WTC11 (cell line): ENCODE measurements at regions of chr17 and their contacts with region 1.

Region 1: GRCh38 chr17:56319517-56319916 is 166.2 kb downstream of the ANKFN1 start:
- DNase-seq: no peak
- ATAC-seq: peak; percentile 49
- H3K4me3 Mint-ChIP-seq: no peak overlapping the region
- H3K27ac Mint-ChIP-seq: no peak overlapping the region
- H3K4me1 Mint-ChIP-seq: peaks cover 44% of the 10 kb centered on the region
- H3K27me3 Mint-ChIP-seq: no peaks in the 10 kb centered on the region; the same call in 1 of the 2 replicates
- CTCF ChIP-seq: peak; percentile 42; the same call in 1 of the 2 replicates

Region 2: GRCh38 chr17:56125830-56126819 is 193.4 kb before region 1 on chr17:
- CTCF ChIA-PET with region 1: interaction called, 17 read pairs
- POLR2A ChIA-PET with region 1: no interaction called
- DNase-seq: no peak
- ATAC-seq: peak; percentile 71
- H3K4me3 Mint-ChIP-seq: no peak overlapping the region
- H3K27ac Mint-ChIP-seq: no peak overlapping the region
- H3K4me1 Mint-ChIP-seq: peaks cover 25% of the 10 kb centered on the region
- H3K27me3 Mint-ChIP-seq: no peaks in the 10 kb centered on the region
- CTCF ChIP-seq: peak; percentile 29; the same call in 1 of the 2 replicates

Region 3: GRCh38 chr17:56173958-56174835 is 145.3 kb before region 1 on chr17:
- CTCF ChIA-PET with region 1: interaction called, 10 read pairs
- POLR2A ChIA-PET with region 1: no interaction called
- DNase-seq: no peak
- ATAC-seq: 0 out of 2 replicates have a peak, but pooled peaks have one; percentile 21
- H3K4me3 Mint-ChIP-seq: no peak overlapping the region
- H3K27ac Mint-ChIP-seq: no peak overlapping the region
- H3K4me1 Mint-ChIP-seq: peaks cover 34% of the 10 kb centered on the region
- H3K27me3 Mint-ChIP-seq: no peaks in the 10 kb centered on the region
- CTCF ChIP-seq: no peak

Region 4: DNA sequence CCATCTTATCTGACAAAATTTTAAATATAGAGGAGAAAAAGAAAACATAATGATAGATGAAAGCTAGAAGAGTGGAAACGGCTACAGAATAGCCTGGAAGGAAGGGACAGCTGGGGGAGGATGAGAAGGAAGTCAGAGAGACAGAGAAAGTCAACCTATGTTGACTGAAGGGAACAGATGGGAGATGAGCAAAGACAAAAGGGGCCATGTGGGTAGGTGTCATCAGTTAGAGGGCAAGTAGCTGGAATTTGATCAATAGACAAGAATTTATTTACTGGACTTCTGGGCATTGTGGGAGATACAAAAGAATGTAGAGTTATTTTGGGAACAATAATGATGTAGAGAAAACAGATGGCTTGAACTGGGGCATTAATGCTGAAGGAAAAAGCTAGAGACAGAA is 28.1 kb after region 1 on chr17:
- CTCF ChIA-PET with region 1: no interaction called
- POLR2A ChIA-PET with region 1: no interaction called
- DNase-seq: no peak
- ATAC-seq: no peak
- H3K4me3 Mint-ChIP-seq: no peak overlapping the region
- H3K27ac Mint-ChIP-seq: no peak overlapping the region
- H3K4me1 Mint-ChIP-seq: no peaks in the 10 kb centered on the region
- H3K27me3 Mint-ChIP-seq: peaks cover 2% of the 10 kb centered on the region; the same call in 1 of the 2 replicates
- CTCF ChIP-seq: no peak